ENCODE measurements at regions of chr1 and their contacts with region 1.

Region 1: DNA sequence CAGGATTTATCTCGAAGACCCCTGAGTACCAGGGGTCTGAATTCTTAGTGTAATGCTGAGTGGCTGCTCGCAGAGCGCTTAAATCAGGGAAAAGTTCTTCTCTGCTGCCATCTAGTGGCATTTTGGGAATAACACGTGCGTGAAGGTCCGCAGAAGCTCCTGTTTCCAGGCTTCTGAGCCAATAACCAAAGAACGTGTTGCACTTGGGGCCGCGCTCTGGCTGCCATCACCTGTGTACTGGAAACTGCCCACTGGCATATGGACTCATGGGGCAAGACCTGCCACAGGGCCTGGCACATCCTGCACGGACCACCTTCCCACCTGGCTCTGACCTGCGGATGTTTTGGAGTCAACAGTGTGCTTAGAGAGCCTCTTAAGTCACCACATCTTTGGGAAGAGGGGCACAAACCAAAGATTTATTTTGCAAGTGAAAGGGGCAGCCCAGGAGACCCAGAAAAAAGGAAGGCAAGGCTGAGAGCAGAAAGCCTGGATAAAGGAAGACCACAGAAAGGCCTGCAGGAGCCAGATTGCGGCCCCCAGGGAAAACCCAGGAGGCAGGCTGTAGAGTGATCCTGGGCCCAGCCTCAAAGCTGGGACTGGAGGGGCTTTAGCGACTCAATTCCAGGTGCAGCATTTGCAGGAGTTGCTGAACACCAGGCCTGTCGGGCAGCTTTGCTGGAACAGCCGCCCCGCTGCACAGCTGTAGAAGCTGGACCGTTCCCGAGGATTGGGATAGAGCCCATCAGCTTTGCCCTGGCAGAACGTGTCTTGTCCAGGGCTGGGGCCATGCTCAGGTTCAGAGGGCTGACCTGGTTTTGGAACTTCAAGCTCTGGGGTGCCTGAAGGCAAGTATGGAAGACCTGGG is 13.0 kb downstream of the CHIT1 start:
- DNase-seq: peak; percentile 42
- H3K4me3 ChIP-seq: no peak overlapping the region
- H3K27ac ChIP-seq: no peak overlapping the region
- H3K4me1 ChIP-seq: no peaks in the 10 kb centered on the region
- H3K27me3 ChIP-seq: peaks cover 4% of the 10 kb centered on the region
- CTCF ChIP-seq: peak; percentile 64 to 78 (median 74)
- EP300 ChIP-seq: no peak
- POLR2A ChIP-seq: no peak

Region 2: GRCh38 chr1:203038891-203039608 is 177.5 kb before region 1 on chr1:
- in situ Hi-C with region 1: loop called in 3 of 4 experiments (anchors 10 kb)
- intact Hi-C with region 1: loop called (anchors 2 kb)
- DNase-seq: peak; percentile 74
- H3K4me3 ChIP-seq: no peak overlapping the region
- H3K27ac ChIP-seq: peak overlapping the region in 3 of 4 donors; percentile 26 to 52 (median 43)
- H3K4me1 ChIP-seq: peaks cover 0 to 9% (median 1%) of the 10 kb centered on the region in 4 donors
- H3K27me3 ChIP-seq: no peaks in the 10 kb centered on the region
- CTCF ChIP-seq: peak; percentile 86 to 91 (median 88)
- EP300 ChIP-seq: no peak
- POLR2A ChIP-seq: no peak

Region 3: GRCh38 chr1:203117611-203118575 is 98.6 kb before region 1 on chr1:
- in situ Hi-C with region 1: loop called in 1 of 4 experiments (anchors 10 kb)
- intact Hi-C with region 1: loop called (anchors 5 kb)
- DNase-seq: peak; percentile 71
- H3K4me3 ChIP-seq: no peak overlapping the region
- H3K27ac ChIP-seq: no peak overlapping the region
- H3K4me1 ChIP-seq: peaks cover 0 to 7% (median 3%) of the 10 kb centered on the region in 4 donors
- H3K27me3 ChIP-seq: peaks cover 65% of the 10 kb centered on the region
- CTCF ChIP-seq: peak; percentile 59 to 75 (median 65)
- EP300 ChIP-seq: no peak
- POLR2A ChIP-seq: no peak

Region 4: DNA sequence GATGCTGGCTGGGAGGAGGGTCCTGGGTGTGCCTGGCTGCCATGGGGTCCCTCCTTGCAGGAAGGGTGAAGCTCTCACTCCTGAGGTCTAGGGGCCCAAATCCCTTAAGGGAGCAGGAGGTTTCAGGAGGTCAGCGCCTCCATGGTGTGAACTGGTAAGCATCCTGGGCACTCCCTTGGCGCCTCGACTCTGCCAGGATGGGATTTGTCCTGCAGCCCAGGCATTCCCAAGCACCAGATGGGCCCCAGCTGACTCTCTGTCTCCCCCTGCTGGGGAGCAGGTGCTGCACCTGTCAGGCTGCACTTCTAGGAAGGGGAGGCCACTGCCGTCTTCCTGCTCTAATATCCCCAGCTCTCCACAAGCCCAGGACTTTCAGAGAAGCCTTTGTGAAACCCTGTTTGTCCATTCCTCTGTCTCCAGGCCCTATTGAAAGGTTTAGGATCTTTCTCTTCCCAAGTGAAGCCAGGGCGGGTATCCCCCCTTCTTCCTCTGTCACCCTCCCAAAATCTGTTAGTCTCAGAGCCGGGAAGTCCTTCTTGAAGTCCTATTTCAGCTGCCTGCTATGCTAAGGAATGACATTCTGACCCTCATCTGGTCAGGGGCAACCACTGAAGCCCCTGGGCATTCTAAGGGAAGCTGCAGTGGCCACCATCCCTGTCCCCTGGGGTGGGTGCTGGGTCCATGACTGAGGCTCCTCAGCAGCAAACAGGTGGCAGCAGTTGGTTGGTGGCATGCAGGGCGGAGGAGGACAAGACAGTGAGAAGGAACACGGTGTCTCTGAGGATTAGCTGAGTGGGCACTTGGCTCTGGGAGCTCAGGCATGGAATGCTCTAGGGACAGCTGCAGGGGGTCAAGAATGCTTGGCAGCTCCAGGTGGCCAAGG is 44.1 kb before region 1 on chr1:
- in situ Hi-C with region 1: no loop called
- intact Hi-C with region 1: no loop called
- DNase-seq: peak; percentile 72
- H3K4me3 ChIP-seq: no peak overlapping the region
- H3K27ac ChIP-seq: no peak overlapping the region
- H3K4me1 ChIP-seq: peaks cover 0 to 7% (median under 1%) of the 10 kb centered on the region in 4 donors
- H3K27me3 ChIP-seq: no peaks in the 10 kb centered on the region
- CTCF ChIP-seq: peak; percentile 74 to 89 (median 84)
- EP300 ChIP-seq: no peak
- POLR2A ChIP-seq: no peak